ENCODE measurements at regions of chr12 and their contacts with region 1.

Region 1: GRCh38 chr12:125183187-125184067 is 118.2 kb downstream of the AACS start:
- DNase-seq: peak; percentile 90
- CTCF ChIP-seq: peak; percentile 100

Region 2: GRCh38 chr12:125159683-125160082 is 23.7 kb before region 1 on chr12:
- CTCF ChIA-PET with region 1: interaction called, 12 read pairs
- POLR2A ChIA-PET with region 1: no interaction called
- DNase-seq: no peak
- CTCF ChIP-seq: no peak

Region 3: DNA sequence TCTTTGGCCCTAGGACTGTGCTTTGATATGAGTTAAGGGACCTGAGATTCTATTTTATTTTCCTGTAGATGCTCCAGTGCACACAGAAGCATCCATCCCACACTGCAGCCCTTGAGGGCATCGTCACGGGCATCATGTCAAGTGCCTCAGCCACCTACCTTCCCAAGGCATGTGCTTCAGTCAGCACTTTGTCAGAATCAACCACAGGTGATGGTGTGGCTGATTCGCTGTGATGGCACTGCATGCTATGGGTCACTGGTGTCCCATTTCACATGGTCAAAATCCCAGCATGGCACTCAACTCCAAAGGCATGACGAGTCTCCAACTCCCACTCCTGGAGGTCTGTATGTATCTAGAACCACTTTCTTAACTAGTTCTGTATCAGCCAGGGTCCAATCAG is 17.4 kb before region 1 on chr12:
- CTCF ChIA-PET with region 1: interaction called, 11 read pairs
- POLR2A ChIA-PET with region 1: no interaction called
- DNase-seq: no peak
- CTCF ChIP-seq: no peak

Region 4: GRCh38 chr12:125203145-125203765 is 19.8 kb after region 1 on chr12:
- CTCF ChIA-PET with region 1: interaction called, 19 read pairs
- POLR2A ChIA-PET with region 1: no interaction called
- DNase-seq: no peak
- CTCF ChIP-seq: peak; percentile 56

Region 5: DNA sequence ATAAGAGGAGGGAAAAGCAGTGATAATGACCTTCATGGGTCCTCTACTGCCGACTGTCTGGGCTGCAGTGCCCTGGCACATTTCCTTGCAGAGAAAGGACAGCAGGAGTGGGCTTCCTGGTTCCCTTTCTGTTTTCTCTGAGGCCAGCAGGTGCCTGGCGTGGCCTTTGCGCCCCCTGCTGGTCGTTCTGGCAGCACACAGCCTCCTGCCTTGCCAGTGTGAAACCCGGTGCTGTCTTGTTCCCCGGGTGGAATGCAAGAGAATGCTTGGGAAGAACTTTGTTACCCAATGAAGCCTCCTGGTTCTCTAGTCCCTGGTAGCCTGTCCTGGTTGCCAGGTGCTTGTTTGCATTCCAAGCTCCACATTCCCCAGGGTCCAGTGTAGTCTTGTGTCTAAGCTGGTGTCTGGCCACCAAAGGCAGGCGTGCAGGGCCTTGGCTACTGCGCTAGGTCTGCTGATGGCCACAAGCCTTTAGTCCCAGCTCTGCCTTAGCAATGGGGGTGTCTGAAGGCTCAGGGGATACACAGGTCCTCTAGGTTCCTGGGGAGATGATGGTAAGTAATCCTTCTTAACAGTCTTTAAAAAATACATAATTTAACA is 1691.1 kb after region 1 on chr12:
- CTCF ChIA-PET with region 1: interaction called, 21 read pairs
- POLR2A ChIA-PET with region 1: no interaction called
- DNase-seq: peak; percentile 63
- CTCF ChIP-seq: peak; percentile 97